Activated CD4-positive, alpha-beta T cell treated with anti-CD3 and anti-CD28 coated beads for 36 hours (primary cell): ENCODE measurements at regions of chr2 and their contacts with region 1.

Region 1: GRCh38 chr2:219294356-219295351 is 14.5 kb downstream of the PTPRN start:
- DNase-seq: peak; percentile 93
- ATAC-seq: peak; percentile 90
- H3K4me3 Mint-ChIP-seq: peak overlapping the region; percentile 68
- H3K27ac Mint-ChIP-seq: peak overlapping the region; percentile 84
- H3K4me1 Mint-ChIP-seq: peaks cover 22% of the 10 kb centered on the region
- H3K27me3 Mint-ChIP-seq: no peaks in the 10 kb centered on the region

Region 2: DNA sequence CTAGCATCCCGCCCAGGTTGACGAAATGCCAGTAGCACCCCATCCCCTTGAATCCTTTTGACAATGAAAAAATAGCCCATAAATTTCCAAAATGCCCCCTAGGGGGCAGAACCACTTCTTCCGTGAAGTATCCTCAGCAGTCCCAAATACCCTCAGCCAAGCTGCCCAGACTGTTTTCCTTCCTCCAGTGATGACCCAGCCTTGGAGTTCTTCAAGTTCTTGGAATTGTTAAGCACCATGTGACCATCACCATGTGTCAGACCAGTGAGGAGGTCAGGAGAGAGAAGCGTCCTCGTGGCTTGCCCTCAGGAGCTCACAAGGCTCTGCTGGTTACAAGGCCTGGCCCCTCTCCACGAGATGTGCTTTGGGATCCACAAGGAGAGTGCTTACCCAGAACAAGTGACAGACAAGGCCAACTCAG is 123.4 kb before region 1 on chr2:
- CTCF ChIA-PET with region 1: interaction called, 29 read pairs
- POLR2A ChIA-PET with region 1: interaction called, 4 read pairs
- intact Hi-C with region 1: loop called in 1 of 2 experiments (anchors 5 kb)
- DNase-seq: peak; percentile 39
- ATAC-seq: peak; percentile 64
- H3K4me3 Mint-ChIP-seq: no peak overlapping the region
- H3K27ac Mint-ChIP-seq: peak overlapping the region; percentile 2
- H3K4me1 Mint-ChIP-seq: peaks cover 31% of the 10 kb centered on the region
- H3K27me3 Mint-ChIP-seq: no peaks in the 10 kb centered on the region

Region 3: GRCh38 chr2:219206442-219207253 is 88.0 kb before region 1 on chr2 and contains the start of gene ZFAND2B:
- CTCF ChIA-PET with region 1: interaction called, 7 read pairs
- POLR2A ChIA-PET with region 1: no interaction called
- intact Hi-C with region 1: loop called in 1 of 2 experiments (anchors 1 kb)
- DNase-seq: peak; percentile 98
- ATAC-seq: peak; percentile 96
- H3K4me3 Mint-ChIP-seq: peak within 1 kb of the TSS; percentile 86
- H3K27ac Mint-ChIP-seq: peak within 1 kb of the TSS; percentile 94
- H3K4me1 Mint-ChIP-seq: peaks cover 34% of the 10 kb centered on the region
- H3K27me3 Mint-ChIP-seq: no peaks in the 10 kb centered on the region
- total RNA-seq, gene ZFAND2B: 21.5 to 27.6 TPM

Region 4: DNA sequence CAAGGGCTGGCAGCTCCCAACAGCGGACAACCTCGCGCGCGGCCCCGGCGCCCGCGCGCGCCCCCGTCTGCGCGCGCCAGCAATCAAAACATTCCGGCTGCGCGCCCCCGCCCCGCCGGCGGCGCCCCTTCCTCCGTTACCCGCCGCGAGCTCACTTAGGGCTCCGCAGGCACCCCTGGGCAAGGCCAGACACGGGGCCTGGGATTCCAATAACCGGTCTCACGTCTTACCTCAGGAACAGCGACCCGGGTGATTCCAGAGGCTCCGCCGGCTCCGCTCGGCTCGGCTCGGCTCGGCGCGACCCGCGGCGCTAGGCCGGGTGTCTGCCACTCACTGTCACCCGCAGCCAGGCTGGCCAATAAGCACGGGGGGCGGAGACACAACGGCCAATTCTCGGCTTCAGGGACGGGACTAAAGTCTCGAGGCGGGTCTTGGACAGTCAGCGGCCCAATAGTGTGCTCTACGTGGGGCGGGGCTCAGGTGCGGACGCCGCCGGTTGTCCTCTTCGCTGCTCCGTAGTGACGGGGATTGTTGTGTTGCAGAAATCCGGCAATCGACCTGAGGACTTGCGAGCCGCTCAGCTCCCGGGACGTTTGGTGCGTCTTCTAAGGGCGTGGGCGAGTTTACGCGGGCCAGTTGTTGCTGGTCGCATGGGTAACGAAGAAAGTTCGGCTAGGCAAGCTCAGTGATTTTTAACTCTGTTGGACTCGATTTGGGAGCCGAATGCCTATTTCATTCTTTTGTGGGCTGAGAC is 65.2 kb before region 1 on chr2 and contains the starts of genes ANKZF1 and ATG9A:
- CTCF ChIA-PET with region 1: interaction called, 13 read pairs
- POLR2A ChIA-PET with region 1: no interaction called
- intact Hi-C with region 1: loop called in 1 of 2 experiments (anchors 1 kb)
- DNase-seq: peak; percentile 99
- ATAC-seq: peak; percentile 98
- H3K4me3 Mint-ChIP-seq: peak within 1 kb of the TSS; percentile 98
- H3K27ac Mint-ChIP-seq: peak within 1 kb of the TSS; percentile 98
- H3K4me1 Mint-ChIP-seq: peaks cover 34% of the 10 kb centered on the region
- H3K27me3 Mint-ChIP-seq: no peaks in the 10 kb centered on the region
- total RNA-seq, gene ANKZF1: 140 to 166 TPM
- total RNA-seq, gene ATG9A: 43.5 to 45.6 TPM

Region 5: DNA sequence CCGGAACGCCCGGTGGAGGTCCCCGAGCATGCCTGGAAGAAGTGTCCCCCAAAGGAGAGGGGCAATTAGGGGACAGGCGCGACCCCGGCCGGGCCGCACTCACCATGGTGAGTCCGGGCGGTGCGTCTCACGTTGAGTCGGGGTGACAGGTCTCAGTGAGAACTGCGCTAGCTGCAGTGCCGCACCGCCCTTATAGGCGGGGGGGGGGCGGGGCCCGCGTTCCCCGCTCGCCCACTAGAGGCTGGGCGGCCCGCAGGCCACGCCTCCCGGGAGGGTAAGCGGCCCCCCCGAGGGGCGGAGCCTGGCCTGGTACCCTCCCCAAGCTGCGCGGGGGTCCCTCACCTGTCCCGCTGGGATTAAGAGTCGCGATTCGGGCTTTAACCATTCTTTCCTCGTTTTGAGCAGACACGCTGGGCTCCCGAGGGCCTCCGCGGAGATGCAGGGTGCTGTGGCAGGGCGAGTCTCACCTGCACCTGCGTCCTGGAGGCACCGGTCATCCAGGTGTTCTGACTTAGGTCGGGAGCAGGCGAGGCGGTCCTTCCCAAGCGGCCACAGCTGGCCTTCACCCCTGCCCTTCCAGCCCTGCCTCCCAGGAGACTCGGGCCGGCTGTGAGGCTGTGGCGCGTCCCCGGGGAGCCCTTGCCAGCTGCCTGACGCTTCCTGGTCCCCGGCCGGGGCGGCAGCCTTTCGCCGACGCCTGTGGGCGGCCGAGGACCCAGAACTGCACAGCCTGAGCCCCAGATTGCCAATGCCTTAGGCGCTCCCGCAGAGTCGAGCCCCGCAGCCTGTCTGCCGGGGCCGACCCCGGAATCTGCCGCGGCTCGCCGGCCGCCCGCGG is 40.7 kb before region 1 on chr2 and contains the start of gene TUBA4A:
- CTCF ChIA-PET with region 1: interaction called, 61 read pairs
- POLR2A ChIA-PET with region 1: interaction called, 4 read pairs
- intact Hi-C with region 1: loop called (anchors 1 to 2 kb)
- DNase-seq: peak; percentile 94
- ATAC-seq: peak; percentile 63
- H3K4me3 Mint-ChIP-seq: peak within 1 kb of the TSS; percentile 89
- H3K27ac Mint-ChIP-seq: peak within 1 kb of the TSS; percentile 93
- H3K4me1 Mint-ChIP-seq: peaks cover 54% of the 10 kb centered on the region
- H3K27me3 Mint-ChIP-seq: no peaks in the 10 kb centered on the region
- total RNA-seq, gene TUBA4A: 210 to 369 TPM

Region 6: GRCh38 chr2:219278655-219279516 is 15.8 kb before region 1 on chr2 and contains the start of gene DNAJB2:
- CTCF ChIA-PET with region 1: interaction called, 257 read pairs
- POLR2A ChIA-PET with region 1: interaction called, 4 read pairs
- intact Hi-C with region 1: loop called (anchors 1 kb)
- DNase-seq: peak; percentile 100
- ATAC-seq: peak; percentile 86
- H3K4me3 Mint-ChIP-seq: peak within 1 kb of the TSS; percentile 96
- H3K27ac Mint-ChIP-seq: peak within 1 kb of the TSS; percentile 95
- H3K4me1 Mint-ChIP-seq: peaks cover 37% of the 10 kb centered on the region
- H3K27me3 Mint-ChIP-seq: no peaks in the 10 kb centered on the region
- total RNA-seq, gene DNAJB2: 51.8 to 62.8 TPM

Region 7: GRCh38 chr2:219543601-219544358 is 249.1 kb after region 1 on chr2 and contains the starts of genes CHPF and TMEM198:
- CTCF ChIA-PET with region 1: no interaction called
- POLR2A ChIA-PET with region 1: no interaction called
- intact Hi-C with region 1: loop called in 1 of 2 experiments (anchors 5 kb)
- DNase-seq: peak; percentile 98
- ATAC-seq: peak; percentile 85
- H3K4me3 Mint-ChIP-seq: peak within 1 kb of the TSS; percentile 87
- H3K27ac Mint-ChIP-seq: peak within 1 kb of the TSS; percentile 66
- H3K4me1 Mint-ChIP-seq: peaks cover 22% of the 10 kb centered on the region
- H3K27me3 Mint-ChIP-seq: no peaks in the 10 kb centered on the region
- total RNA-seq, gene CHPF: 14.1 to 17.1 TPM
- total RNA-seq, gene TMEM198: 2.4 to 2.7 TPM